Heart right ventricle (tissue), 16 donors: ENCODE measurements at regions of chr3 and their contacts with region 1.

Region 1: GRCh38 chr3:168165390-168166269 is 69.9 kb upstream of the GOLIM4 start:
- DNase-seq: peak in 1 of 2 donors; percentile 70
- ATAC-seq: peak in 7 of 8 donors; percentile 71 to 87 (median 77)
- H3K4me3 ChIP-seq: peak overlapping the region in 4 of 10 donors; percentile 15 to 34 (median 26)
- H3K27ac ChIP-seq: peak overlapping the region in 4 of 10 donors; percentile 16 to 52 (median 44)
- H3K4me1 ChIP-seq: peaks cover 0 to 5% (median 0%) of the 10 kb centered on the region in 9 donors
- H3K27me3 ChIP-seq: no peaks in the 10 kb centered on the region
- CTCF ChIP-seq: peak; percentile 56 to 93 (median 81)

Region 2: DNA sequence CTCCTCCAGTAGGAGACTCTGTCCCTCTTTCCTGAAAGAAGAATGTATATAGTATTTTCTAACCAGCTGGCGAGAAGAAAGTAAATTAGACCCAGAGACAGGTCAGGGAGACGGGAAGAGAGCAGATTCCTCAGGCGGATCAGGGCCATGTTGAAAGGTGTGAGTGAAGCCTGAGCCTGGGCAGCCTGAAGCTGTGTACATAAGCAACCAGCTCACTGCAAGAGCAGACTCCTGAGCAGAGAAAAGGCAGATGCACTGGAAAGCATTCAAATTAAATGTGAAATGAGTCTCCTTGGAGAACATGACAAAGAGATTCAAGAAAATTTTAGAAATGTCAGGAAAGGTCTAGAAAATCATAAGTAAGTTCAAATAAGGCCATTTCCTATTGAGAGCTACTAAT is 235.7 kb before region 1 on chr3:
- intact Hi-C with region 1: loop called in 4 of 10 experiments (anchors 10 kb)
- DNase-seq: peak in 1 of 2 donors; percentile 6
- ATAC-seq: peak in 6 of 8 donors; percentile 60 to 80 (median 67)
- H3K4me3 ChIP-seq: no peak overlapping the region
- H3K27ac ChIP-seq: no peak overlapping the region
- H3K4me1 ChIP-seq: peaks cover 0 to 8% (median 0%) of the 10 kb centered on the region in 9 donors
- H3K27me3 ChIP-seq: no peaks in the 10 kb centered on the region
- CTCF ChIP-seq: no peak

Region 3: DNA sequence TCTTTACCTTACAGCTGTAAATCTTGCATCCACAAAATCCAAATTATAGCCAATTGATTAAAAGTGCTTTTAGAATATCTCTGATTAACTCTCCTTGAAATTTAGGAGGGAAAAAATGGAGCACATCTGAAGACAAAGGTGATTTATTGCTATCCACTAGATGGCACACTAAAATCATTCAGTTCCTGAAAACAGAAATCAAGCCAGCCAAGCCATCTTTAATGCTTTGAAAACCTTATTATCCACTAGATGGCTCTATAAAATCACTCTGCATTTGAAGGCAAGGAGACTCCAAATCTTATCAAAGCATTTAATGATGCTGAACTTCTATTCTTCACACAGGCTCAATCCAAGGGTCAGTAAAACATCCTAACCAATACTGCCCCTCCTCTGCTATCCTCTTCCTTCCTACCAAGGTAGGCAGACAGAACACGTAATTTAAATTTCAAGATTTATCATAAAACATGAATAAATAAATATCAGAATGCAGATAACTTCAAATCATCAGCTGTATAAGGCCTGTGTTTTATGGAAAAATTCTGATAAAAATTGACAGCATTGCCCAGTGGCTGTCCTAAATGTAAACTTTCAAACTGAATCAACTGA is 118.3 kb before region 1 on chr3:
- intact Hi-C with region 1: loop called (anchors 1 to 5 kb)
- DNase-seq: no peak
- ATAC-seq: peak; percentile 52 to 67 (median 63)
- H3K4me3 ChIP-seq: no peak overlapping the region
- H3K27ac ChIP-seq: no peak overlapping the region
- H3K4me1 ChIP-seq: peaks cover 0 to 71% (median 47%) of the 10 kb centered on the region in 9 donors
- H3K27me3 ChIP-seq: no peaks in the 10 kb centered on the region
- CTCF ChIP-seq: peak; percentile 72 to 97 (median 83)

Region 4: DNA sequence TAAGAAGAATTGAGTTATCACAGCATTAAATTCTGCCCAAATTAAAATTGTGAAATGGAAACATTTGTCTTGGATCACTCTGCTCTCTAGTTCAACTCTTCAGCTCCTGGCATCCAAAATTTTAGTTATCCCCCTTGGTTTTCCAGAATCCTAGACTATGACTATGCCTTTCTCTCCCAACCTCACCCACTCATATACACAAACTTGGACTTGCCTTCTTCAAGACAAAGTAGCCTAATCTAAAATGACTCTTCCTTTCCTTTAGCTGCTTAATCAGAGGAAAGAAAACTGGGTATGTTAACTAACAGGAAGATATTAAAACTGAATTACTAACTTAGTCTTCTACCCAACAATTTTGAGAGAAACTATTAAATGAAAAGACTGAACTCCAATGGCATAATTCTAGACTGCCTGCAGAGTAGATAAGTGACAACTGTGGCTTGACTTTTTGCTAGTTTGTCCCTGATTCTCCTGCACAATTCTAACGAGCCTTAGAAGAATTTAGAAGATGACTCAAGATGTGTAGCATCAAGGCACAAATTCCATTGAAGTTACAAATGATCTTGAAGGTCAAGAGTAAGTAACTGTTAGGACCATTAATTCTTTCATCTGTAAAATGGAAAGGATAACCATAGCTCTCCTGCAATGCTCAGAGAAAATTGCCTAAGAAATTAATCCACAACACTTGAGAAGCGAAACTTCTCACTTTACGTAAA is 64.7 kb before region 1 on chr3:
- intact Hi-C with region 1: loop called in 2 of 10 experiments (anchors 5 kb)
- DNase-seq: no peak
- ATAC-seq: no peak
- H3K4me3 ChIP-seq: no peak overlapping the region
- H3K27ac ChIP-seq: no peak overlapping the region
- H3K4me1 ChIP-seq: peaks cover 0 to 10% (median 7%) of the 10 kb centered on the region in 9 donors
- H3K27me3 ChIP-seq: no peaks in the 10 kb centered on the region
- CTCF ChIP-seq: no peak